IMR-90 (cell line): ENCODE measurements at regions of chr21 and their contacts with region 1.

Region 1: GRCh38 chr21:34745557-34746255 is 76.9 kb downstream of the CLIC6 start:
- DNase-seq: peak; percentile 86
- ATAC-seq: peak; percentile 99
- H3K4me3 ChIP-seq: no peak overlapping the region
- H3K27ac ChIP-seq: peak overlapping the region; percentile 3; the same call in 1 of the 2 replicates
- H3K4me1 ChIP-seq: 0 out of 2 replicates have a peak, but pooled peaks cover 4% of the 10 kb centered on the region
- H3K27me3 ChIP-seq: no peaks in the 10 kb centered on the region; the same call in 1 of the 2 replicates
- CTCF ChIP-seq: peak; percentile 98
- POLR2A ChIP-seq: peak; percentile 66
- RAD21 ChIP-seq: peak; percentile 99

Region 2: DNA sequence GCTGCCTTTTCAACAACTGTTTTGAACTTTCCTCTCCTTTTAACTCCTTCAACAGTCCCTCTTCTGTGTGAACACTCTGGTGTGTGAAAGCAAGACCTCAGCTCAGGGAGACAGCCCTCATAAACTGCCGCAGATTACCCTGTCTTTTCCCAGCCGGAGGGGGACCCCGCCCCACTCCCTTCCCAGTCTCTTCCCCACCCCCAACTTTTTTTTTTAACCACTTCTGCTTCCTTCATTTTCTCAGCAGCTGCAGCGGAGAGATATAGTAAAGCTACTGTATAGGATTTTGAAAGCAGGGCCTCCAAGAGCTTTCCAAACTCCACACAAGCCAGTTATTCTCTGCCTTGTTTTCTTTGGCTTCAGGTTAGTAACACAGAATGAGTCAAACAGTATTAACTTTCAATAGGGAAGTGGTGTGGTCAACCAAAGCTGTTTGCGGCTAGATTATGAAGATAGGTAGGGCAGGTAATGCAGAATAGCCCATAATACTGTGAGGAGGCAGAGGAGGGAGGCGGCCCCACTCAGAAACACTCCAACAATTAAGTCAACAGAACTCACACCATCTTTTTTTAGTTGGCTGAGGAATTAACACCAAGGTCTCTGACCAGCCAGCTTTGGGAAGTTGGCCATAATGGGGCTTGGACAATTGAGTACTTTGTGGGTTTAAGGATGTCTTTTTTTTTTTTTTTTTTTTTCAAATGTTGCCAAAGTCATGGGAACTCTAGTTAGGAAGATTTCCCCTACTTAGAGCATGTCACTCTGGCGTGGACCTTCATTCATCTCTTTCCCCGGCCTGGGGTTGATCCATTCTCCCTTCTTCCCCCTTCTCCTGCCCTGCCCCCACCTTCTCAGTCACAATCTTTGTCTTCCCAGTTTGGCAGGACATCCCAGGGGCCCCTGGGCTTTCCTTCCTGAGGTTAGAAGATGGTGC is 100.1 kb after region 1 on chr21:
- CTCF ChIA-PET with region 1: interaction called, 6 read pairs
- POLR2A ChIA-PET with region 1: no interaction called
- dilution Hi-C with region 1: no loop called
- in situ Hi-C with region 1: no loop called
- intact Hi-C with region 1: loop called (anchors 5 kb)
- DNase-seq: peak; percentile 90
- ATAC-seq: peak; percentile 11
- H3K4me3 ChIP-seq: no peak overlapping the region
- H3K27ac ChIP-seq: peak overlapping the region; percentile 63
- H3K4me1 ChIP-seq: peaks cover 36% of the 10 kb centered on the region
- H3K27me3 ChIP-seq: no peaks in the 10 kb centered on the region
- CTCF ChIP-seq: no peak
- POLR2A ChIP-seq: no peak; the same call in none of the 2 replicates
- RAD21 ChIP-seq: peak; percentile 24

Region 3: GRCh38 chr21:34881894-34882371 is 136.2 kb after region 1 on chr21:
- CTCF ChIA-PET with region 1: interaction called, 9 read pairs
- POLR2A ChIA-PET with region 1: interaction called, 12 read pairs
- dilution Hi-C with region 1: no loop called
- in situ Hi-C with region 1: loop called (anchors 5 kb)
- intact Hi-C with region 1: loop called (anchors 1 kb)
- DNase-seq: peak; percentile 92
- ATAC-seq: peak; percentile 61
- H3K4me3 ChIP-seq: peak overlapping the region; percentile 32; the same call in 1 of the 2 replicates
- H3K27ac ChIP-seq: peak overlapping the region; percentile 90
- H3K4me1 ChIP-seq: peaks cover 13% of the 10 kb centered on the region
- H3K27me3 ChIP-seq: no peaks in the 10 kb centered on the region
- CTCF ChIP-seq: no peak
- POLR2A ChIP-seq: peak; percentile 59
- RAD21 ChIP-seq: no peak

Region 4: DNA sequence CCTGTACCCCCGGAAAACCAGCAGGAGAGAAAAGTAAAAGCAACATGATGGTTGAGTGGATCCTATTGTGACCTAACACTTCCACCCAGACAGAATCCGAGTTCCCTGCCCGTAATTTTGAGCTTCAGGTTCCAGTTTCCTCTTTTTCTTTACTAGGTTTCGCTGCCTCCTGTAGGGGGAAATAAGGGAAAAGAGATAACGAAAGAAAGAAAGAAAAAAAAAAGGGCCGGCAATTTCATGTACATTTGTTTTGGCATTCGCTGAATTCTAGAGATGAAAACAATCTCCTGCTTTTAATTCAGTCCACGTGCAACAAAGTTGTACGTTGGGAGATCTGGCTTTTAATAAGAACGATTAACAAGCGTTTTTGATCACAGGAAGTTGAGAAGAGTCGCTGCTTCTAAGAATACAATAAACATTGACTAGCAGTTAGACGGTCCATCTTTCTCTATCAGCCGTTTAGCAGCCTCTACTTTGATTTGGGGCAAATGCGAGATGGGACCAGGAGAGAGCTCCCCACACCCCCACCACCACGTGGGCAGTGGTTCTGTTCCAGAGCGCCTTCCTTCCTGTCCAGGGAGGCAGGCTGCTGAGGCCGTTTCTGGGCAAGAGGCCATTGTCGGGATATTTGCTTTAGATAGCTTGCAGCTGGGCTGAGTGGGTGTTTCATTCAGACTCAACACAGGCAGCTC is 459.3 kb after region 1 on chr21:
- CTCF ChIA-PET with region 1: no interaction called
- POLR2A ChIA-PET with region 1: no interaction called
- dilution Hi-C with region 1: no loop called
- in situ Hi-C with region 1: no loop called
- intact Hi-C with region 1: loop called (anchors 2 kb)
- DNase-seq: peak; percentile 98
- ATAC-seq: peak; percentile 78
- H3K4me3 ChIP-seq: peak overlapping the region; percentile 25; the same call in 1 of the 2 replicates
- H3K27ac ChIP-seq: peak overlapping the region; percentile 91
- H3K4me1 ChIP-seq: peaks cover 40% of the 10 kb centered on the region
- H3K27me3 ChIP-seq: no peaks in the 10 kb centered on the region
- CTCF ChIP-seq: peak; percentile 44
- POLR2A ChIP-seq: peak; percentile 53; the same call in 1 of the 2 replicates
- RAD21 ChIP-seq: peak; percentile 43

Region 5: DNA sequence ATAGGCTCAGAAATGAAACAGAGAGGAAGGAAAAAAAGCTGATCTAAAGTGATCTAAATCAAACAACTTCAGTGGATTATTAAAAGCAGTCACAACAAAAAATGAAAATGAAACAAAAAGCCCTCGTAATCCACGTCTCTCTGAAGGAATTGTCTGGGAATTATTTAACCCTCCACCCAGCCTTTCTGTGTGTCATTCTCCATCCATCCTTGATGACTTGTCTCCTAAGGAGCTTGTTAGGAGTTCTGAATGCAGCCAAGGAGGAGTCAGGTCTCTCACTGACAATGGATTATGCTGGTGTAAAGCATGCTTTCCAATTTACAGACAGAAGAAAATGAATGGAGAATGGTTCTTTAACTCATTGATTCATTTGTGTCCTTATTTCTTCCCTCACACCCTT is 662.7 kb after region 1 on chr21:
- CTCF ChIA-PET with region 1: no interaction called
- POLR2A ChIA-PET with region 1: no interaction called
- dilution Hi-C with region 1: no loop called
- in situ Hi-C with region 1: loop called (anchors 25 kb)
- intact Hi-C with region 1: loop called (anchors 5 kb)
- DNase-seq: peak; percentile 58
- ATAC-seq: peak; percentile 72
- H3K4me3 ChIP-seq: peak overlapping the region; percentile 31; the same call in 1 of the 2 replicates
- H3K27ac ChIP-seq: no peak overlapping the region
- H3K4me1 ChIP-seq: no peaks in the 10 kb centered on the region
- H3K27me3 ChIP-seq: no peaks in the 10 kb centered on the region
- CTCF ChIP-seq: no peak
- POLR2A ChIP-seq: no peak
- RAD21 ChIP-seq: no peak

Region 6: GRCh38 chr21:35840197-35840799 is 1094.6 kb after region 1 on chr21:
- CTCF ChIA-PET with region 1: interaction called, 11 read pairs
- POLR2A ChIA-PET with region 1: no interaction called
- dilution Hi-C with region 1: no loop called
- in situ Hi-C with region 1: loop called (anchors 10 kb)
- intact Hi-C with region 1: loop called (anchors 1 kb)
- DNase-seq: peak; percentile 91
- ATAC-seq: peak; percentile 85
- H3K4me3 ChIP-seq: no peak overlapping the region
- H3K27ac ChIP-seq: no peak overlapping the region
- H3K4me1 ChIP-seq: no peaks in the 10 kb centered on the region
- H3K27me3 ChIP-seq: no peaks in the 10 kb centered on the region
- CTCF ChIP-seq: peak; percentile 94
- POLR2A ChIP-seq: 0 out of 2 replicates have a peak, but pooled peaks have one; percentile 29
- RAD21 ChIP-seq: peak; percentile 90

Region 7: DNA sequence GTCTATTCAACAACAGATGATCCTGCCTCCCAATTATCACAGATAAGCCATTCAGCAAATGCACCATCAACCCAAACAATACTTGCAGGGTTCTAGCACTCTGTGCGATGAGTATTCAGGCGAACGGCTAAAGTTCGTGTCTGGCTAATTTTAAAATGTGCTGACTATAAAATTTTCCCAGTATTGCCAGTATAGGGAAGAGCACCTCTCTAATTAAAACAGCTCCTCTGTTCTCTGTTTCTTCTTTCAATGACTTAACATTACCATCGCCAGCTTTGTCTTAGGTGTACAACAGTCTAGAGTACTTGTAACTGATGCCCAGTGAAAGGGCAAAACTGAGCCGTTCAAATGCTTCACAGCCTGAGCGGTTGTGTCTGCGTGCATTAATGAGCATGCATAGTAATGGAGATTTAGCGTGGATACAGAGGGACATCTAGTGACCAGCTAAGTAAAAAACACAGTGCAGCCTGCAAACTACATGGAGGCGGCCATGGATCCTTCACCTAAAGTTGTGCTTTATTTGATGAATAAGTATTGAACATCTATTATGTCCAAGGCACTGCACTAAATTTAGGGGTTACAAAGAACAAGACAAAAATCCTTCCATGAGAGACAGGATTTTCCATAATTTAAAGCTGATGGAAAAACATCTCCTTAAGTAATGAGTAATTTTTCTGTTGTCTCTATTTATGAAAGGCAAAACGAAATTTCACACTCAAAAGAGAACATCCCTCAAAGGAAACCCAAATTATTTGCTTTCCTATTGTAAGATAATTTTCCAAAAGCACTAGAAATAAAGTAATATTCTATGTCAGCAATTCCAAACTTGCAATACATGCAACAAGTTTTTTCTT is 1194.6 kb after region 1 on chr21:
- CTCF ChIA-PET with region 1: interaction called, 4 read pairs
- POLR2A ChIA-PET with region 1: no interaction called
- dilution Hi-C with region 1: no loop called
- in situ Hi-C with region 1: loop called (anchors 25 kb)
- intact Hi-C with region 1: loop called (anchors 1 kb)
- DNase-seq: peak; percentile 81
- ATAC-seq: peak; percentile 100
- H3K4me3 ChIP-seq: no peak overlapping the region
- H3K27ac ChIP-seq: no peak overlapping the region
- H3K4me1 ChIP-seq: no peaks in the 10 kb centered on the region
- H3K27me3 ChIP-seq: no peaks in the 10 kb centered on the region; the same call in 1 of the 2 replicates
- CTCF ChIP-seq: peak; percentile 88
- POLR2A ChIP-seq: no peak
- RAD21 ChIP-seq: peak; percentile 93